Activated T-helper 1 cell treated with anti-CD3 and anti-CD28 coated beads, Interleukin-12 subunit alpha, Interleukin-12 subunit beta, Interleukin-2, Interleukin-4 antibody, amounts not matched to agents 30 ng/mL and 10 ng/mL and 1 ng/mL, durations not matched to agents 14 hours and 24 hours and 36 hours (primary cell): ENCODE measurements at regions of chr7 and their contacts with region 1.

Region 1: DNA sequence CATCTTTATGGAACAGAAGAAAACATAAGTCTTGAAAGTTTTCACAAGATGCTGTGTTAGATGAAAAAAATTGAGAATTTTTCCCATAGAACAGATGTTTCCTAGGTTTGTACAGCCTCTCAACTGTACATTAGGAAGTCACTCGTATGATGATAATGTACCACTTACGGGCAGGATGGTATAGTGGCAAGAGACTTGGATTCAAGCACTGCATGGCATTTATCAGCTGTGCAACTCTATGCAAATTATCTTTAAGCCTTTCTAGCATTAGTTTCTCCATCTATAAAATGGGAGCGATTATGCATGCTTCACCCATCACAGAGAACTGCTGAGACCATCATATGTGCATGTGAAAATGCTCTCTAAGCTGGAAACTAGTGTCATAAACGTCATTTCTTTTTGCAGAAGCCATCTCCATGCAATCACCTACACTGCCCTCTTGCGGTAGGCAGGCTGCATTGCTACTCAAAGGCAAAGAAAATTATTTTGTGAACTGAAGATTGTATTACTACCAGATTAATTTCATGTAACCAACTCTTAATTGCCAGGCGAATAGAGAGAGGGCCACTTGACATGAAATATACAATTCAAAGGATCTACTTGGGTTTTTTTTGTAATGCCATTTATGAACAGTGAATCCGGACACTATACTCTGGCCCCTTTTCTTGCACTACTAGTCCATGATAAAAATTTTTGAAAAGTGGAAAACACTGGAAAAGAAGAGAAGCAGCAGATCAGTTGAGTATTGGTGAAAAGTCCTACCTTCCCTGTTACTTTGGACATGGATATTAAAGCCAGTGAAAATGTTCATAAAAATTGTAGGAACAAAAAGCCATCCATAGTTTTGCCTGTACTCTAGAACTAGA is 102.3 kb downstream of the JAZF1 start:
- DNase-seq: peak; percentile 12
- H3K4me3 Mint-ChIP-seq: no peak overlapping the region
- H3K27ac Mint-ChIP-seq: no peak overlapping the region
- H3K4me1 Mint-ChIP-seq: no peaks in the 10 kb centered on the region
- H3K27me3 Mint-ChIP-seq: peaks cover 11% of the 10 kb centered on the region

Region 2: GRCh38 chr7:28062197-28062991 is 15.9 kb before region 1 on chr7:
- intact Hi-C with region 1: loop called (anchors 2 kb)
- DNase-seq: no peak
- H3K4me3 Mint-ChIP-seq: no peak overlapping the region
- H3K27ac Mint-ChIP-seq: no peak overlapping the region
- H3K4me1 Mint-ChIP-seq: no peaks in the 10 kb centered on the region
- H3K27me3 Mint-ChIP-seq: peaks cover 12% of the 10 kb centered on the region